ENCODE measurements at regions of chr9 and their contacts with region 1.

Region 1: DNA sequence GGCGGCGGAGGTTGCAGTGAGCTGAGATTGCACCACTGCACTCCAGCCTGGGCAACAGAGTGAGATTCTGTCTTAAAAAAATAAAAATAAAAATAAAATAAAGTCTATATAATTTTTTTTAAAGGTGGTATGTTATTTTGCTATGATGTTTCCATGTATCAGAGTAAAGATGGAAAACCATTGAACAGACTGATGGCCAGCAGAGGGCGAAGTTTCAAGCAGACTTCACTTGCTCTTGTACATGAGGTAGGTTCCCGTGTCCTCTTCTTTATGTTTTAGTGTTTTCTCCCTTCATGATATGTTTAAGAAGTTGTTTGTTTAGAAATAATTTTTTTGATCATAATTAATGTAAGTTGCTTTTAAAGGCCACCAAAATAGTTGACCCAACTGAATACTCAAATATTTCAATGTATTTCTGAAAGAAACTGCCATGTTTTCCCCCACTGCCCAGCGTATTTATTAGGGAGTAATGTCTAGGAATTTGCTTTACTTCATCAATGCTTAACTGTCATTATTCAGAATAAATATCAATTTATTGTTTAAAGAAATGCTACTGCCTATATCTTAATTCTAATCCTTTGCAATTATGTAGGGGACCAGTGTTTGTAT is 146.4 kb downstream of the HACD4 start:
- DNase-seq: peak; percentile 37 to 72 (median 58)
- ATAC-seq: peak; percentile 44
- H3K4me3 ChIP-seq: no peak overlapping the region
- H3K4me3 Mint-ChIP-seq: no peak overlapping the region
- H3K27ac ChIP-seq: no peak overlapping the region
- H3K27ac Mint-ChIP-seq: no peak overlapping the region
- H3K4me1 ChIP-seq: no peaks in the 10 kb centered on the region
- H3K4me1 Mint-ChIP-seq: no peaks in the 10 kb centered on the region
- H3K27me3 ChIP-seq: no peaks in the 10 kb centered on the region
- H3K27me3 Mint-ChIP-seq: no peaks in the 10 kb centered on the region
- CTCF ChIP-seq: peak; percentile 76

Region 2: GRCh38 chr9:20356403-20357035 is 528.6 kb before region 1 on chr9:
- CTCF ChIA-PET with region 1: no interaction called
- POLR2A ChIA-PET with region 1: no interaction called
- intact Hi-C with region 1: loop called (anchors 5 to 10 kb)
- DNase-seq: peak; percentile 6 to 69 (median 42)
- ATAC-seq: peak; percentile 75
- H3K4me3 ChIP-seq: no peak overlapping the region
- H3K4me3 Mint-ChIP-seq: no peak overlapping the region
- H3K27ac ChIP-seq: no peak overlapping the region
- H3K27ac Mint-ChIP-seq: no peak overlapping the region
- H3K4me1 ChIP-seq: peaks cover 7% of the 10 kb centered on the region
- H3K4me1 Mint-ChIP-seq: peaks cover 38% of the 10 kb centered on the region
- H3K27me3 ChIP-seq: no peaks in the 10 kb centered on the region
- H3K27me3 Mint-ChIP-seq: no peaks in the 10 kb centered on the region
- CTCF ChIP-seq: peak; percentile 59

Region 3: DNA sequence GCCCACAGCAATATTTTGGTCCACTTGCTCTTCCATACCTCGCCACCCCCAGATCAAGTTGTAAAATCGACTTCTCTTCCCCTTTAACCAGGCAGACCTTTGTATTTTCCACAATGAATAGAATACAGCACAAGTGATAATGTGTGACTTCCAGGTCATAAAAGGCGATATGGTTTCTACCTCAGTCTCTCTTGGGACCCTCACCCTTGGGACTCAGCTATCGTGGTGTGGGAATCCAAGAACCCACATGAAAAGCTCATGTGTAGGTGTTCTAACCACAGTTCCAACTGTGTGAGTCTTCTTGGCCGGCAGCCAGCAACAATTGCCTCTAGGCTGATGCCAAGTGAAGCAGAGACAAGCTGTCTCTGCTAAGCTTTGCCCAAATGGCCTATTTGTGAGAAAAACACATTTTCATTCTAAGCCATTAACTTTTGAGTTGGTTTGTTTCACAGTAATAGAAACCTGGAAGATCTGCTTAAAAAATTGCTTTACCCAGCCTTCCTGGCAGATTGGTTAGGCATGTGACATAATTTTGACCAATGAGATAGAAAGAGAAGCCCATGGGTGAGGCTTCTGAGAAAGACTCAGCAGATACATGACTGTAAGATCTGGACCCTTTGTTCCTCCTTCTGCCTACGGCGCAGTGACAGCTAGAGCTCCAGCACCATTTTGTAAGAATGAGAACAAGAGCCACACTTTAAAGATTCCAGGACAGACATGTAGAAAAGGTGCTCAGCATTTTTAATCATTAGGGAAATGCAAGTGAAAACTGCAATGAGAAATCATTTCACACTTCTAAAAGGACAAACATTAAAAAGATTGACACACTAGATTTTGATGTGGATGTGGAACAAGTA is 244.5 kb before region 1 on chr9:
- CTCF ChIA-PET with region 1: no interaction called
- POLR2A ChIA-PET with region 1: no interaction called
- intact Hi-C with region 1: no loop called
- DNase-seq: peak; percentile 46 to 87 (median 82)
- ATAC-seq: peak; percentile 85
- H3K4me3 ChIP-seq: peak overlapping the region in 1 of 2 experiments; percentile 10
- H3K4me3 Mint-ChIP-seq: peak overlapping the region; percentile 51
- H3K27ac ChIP-seq: no peak overlapping the region
- H3K27ac Mint-ChIP-seq: peak overlapping the region; percentile 69
- H3K4me1 ChIP-seq: peaks cover 19% of the 10 kb centered on the region
- H3K4me1 Mint-ChIP-seq: peaks cover 18% of the 10 kb centered on the region
- H3K27me3 ChIP-seq: no peaks in the 10 kb centered on the region
- H3K27me3 Mint-ChIP-seq: no peaks in the 10 kb centered on the region
- CTCF ChIP-seq: no peak

Region 4: DNA sequence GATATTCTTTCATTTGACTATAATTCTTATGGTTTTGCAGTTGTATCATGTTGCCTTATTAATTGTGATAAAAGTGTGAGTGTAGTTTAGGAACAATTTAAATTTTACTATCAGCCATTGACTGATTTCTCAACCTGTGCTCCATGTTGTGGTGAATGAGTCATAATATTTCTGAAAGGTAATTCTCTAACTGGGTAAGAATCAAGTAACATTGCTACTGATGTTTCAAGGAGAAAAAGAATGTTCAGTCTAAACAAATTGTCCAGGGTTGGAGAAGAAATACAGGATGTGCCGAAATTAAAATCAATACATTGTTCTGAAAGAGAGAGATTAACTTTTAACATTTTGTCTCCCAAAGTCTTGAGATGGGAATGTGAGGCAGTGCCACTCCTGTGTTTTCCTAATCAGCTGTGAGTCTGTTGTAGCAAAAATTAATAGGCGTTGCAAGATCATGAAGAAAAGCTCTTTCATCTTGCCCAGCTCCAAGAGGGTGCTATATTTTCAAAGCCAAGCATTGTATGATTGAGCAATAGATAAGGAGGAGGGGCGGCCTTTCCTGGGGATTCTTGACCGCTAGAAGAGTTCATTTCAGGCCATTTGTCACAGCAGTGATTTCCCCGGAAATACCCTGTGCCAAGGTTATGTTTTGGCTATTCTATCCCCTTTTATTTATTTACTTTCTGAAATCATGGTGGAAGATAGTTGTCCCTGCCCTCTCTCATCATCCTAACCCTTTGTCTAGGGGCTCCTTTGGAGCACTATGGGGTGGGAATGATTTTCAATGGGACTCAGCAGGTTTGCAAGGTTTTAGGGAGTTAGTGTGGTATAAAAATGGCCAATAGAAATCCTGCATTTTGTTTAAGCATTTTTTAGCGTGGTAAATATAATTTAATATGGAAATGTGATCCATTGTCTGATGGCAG is 49.5 kb before region 1 on chr9:
- CTCF ChIA-PET with region 1: no interaction called
- POLR2A ChIA-PET with region 1: no interaction called
- intact Hi-C with region 1: no loop called
- DNase-seq: no peak
- ATAC-seq: no peak
- H3K4me3 ChIP-seq: no peak overlapping the region
- H3K4me3 Mint-ChIP-seq: no peak overlapping the region
- H3K27ac ChIP-seq: no peak overlapping the region
- H3K27ac Mint-ChIP-seq: no peak overlapping the region
- H3K4me1 ChIP-seq: no peaks in the 10 kb centered on the region
- H3K4me1 Mint-ChIP-seq: no peaks in the 10 kb centered on the region
- H3K27me3 ChIP-seq: no peaks in the 10 kb centered on the region
- H3K27me3 Mint-ChIP-seq: no peaks in the 10 kb centered on the region
- CTCF ChIP-seq: no peak

Region 5: GRCh38 chr9:20872340-20872977 is 12.6 kb before region 1 on chr9:
- CTCF ChIA-PET with region 1: interaction called, 18 read pairs
- POLR2A ChIA-PET with region 1: no interaction called
- intact Hi-C with region 1: no loop called
- DNase-seq: no peak
- ATAC-seq: no peak
- H3K4me3 ChIP-seq: no peak overlapping the region
- H3K4me3 Mint-ChIP-seq: no peak overlapping the region
- H3K27ac ChIP-seq: no peak overlapping the region
- H3K27ac Mint-ChIP-seq: no peak overlapping the region
- H3K4me1 ChIP-seq: peaks cover 4% of the 10 kb centered on the region
- H3K4me1 Mint-ChIP-seq: peaks cover 5% of the 10 kb centered on the region
- H3K27me3 ChIP-seq: no peaks in the 10 kb centered on the region
- H3K27me3 Mint-ChIP-seq: no peaks in the 10 kb centered on the region
- CTCF ChIP-seq: no peak

Region 6: GRCh38 chr9:20929276-20929675 is 44.2 kb after region 1 on chr9:
- CTCF ChIA-PET with region 1: no interaction called
- POLR2A ChIA-PET with region 1: no interaction called
- intact Hi-C with region 1: loop called in 1 of 2 experiments (anchors 5 kb)
- DNase-seq: no peak
- ATAC-seq: no peak
- H3K4me3 ChIP-seq: no peak overlapping the region
- H3K4me3 Mint-ChIP-seq: no peak overlapping the region
- H3K27ac ChIP-seq: no peak overlapping the region
- H3K27ac Mint-ChIP-seq: no peak overlapping the region
- H3K4me1 ChIP-seq: no peaks in the 10 kb centered on the region
- H3K4me1 Mint-ChIP-seq: peaks cover 9% of the 10 kb centered on the region
- H3K27me3 ChIP-seq: no peaks in the 10 kb centered on the region
- H3K27me3 Mint-ChIP-seq: no peaks in the 10 kb centered on the region
- CTCF ChIP-seq: no peak

Region 7: DNA sequence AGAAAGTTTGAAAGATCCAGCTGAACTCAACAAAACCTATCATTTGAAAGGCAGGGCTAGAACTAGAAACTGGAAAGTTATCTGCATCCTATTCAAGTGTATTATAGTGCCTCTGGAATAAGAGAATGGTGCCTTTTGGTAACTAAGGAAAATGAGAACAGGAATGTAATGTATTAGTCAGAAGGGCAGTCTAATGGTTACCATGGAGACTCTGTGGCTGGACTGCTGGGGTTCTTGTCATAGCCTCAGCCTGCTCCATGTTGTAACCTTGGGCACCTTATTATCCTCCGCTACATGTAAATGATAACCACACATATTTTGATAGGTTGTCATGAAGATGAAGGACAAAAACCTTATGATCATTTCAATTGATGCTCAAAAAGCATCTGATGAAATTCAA is 217.2 kb after region 1 on chr9:
- CTCF ChIA-PET with region 1: interaction called, 21 read pairs
- POLR2A ChIA-PET with region 1: no interaction called
- intact Hi-C with region 1: no loop called
- DNase-seq: no peak
- ATAC-seq: no peak
- H3K4me3 ChIP-seq: no peak overlapping the region
- H3K4me3 Mint-ChIP-seq: no peak overlapping the region
- H3K27ac ChIP-seq: no peak overlapping the region
- H3K27ac Mint-ChIP-seq: no peak overlapping the region
- H3K4me1 ChIP-seq: peaks cover 3% of the 10 kb centered on the region
- H3K4me1 Mint-ChIP-seq: peaks cover 4% of the 10 kb centered on the region
- H3K27me3 ChIP-seq: no peaks in the 10 kb centered on the region
- H3K27me3 Mint-ChIP-seq: no peaks in the 10 kb centered on the region
- CTCF ChIP-seq: no peak

Measured in CD8-positive, alpha-beta T cell (primary cell).